ENCODE measurements at regions of chr17 and their contacts with region 1.

Region 1: DNA sequence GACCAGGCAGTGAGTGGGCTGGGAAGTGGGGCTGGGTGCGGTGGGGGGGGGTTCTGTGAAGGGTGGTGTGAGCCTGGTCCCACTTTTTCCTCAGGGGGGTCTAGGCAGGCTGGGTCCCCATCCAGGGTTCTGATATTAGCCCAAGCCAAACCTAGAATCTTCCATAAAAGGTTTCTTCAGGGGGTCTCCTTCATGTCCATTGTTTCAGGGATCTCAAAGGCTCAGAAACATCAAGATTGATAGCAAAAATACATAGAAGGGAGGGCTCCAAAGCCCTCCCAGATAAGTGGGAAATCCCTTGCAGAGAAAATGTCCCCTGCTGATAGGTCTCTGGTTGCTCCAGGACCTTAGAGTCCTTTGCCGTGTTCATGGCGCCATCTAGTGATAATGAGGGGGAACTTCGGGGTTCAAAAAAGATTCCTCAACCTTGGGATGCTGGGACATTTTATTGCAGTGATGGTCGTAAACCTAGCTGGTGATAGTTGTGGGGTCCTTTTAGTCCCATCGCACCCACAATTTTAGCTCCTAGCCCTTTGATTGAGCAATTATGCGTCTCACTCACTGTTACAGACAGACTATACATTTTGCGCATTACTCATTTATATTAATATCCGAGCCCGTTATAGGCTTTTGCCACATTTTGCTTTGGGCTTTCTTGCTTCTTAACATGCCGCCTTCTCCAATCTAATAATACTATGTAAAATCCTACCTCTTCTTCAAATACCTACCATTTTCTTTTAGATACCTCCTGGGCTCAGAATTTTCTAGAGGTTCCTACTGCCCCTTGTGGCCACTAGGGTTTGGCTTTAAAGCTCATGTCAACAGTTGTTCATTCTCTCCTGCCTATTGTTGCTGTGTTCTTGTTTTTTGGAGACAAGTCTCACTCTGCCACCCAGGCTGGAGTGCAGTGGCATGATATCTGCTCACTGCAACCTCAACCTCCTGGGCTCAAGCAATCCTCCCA is 35.1 kb downstream of the IGF2BP1 start:
- DNase-seq: peak; percentile 56
- ATAC-seq: no peak

Region 2: DNA sequence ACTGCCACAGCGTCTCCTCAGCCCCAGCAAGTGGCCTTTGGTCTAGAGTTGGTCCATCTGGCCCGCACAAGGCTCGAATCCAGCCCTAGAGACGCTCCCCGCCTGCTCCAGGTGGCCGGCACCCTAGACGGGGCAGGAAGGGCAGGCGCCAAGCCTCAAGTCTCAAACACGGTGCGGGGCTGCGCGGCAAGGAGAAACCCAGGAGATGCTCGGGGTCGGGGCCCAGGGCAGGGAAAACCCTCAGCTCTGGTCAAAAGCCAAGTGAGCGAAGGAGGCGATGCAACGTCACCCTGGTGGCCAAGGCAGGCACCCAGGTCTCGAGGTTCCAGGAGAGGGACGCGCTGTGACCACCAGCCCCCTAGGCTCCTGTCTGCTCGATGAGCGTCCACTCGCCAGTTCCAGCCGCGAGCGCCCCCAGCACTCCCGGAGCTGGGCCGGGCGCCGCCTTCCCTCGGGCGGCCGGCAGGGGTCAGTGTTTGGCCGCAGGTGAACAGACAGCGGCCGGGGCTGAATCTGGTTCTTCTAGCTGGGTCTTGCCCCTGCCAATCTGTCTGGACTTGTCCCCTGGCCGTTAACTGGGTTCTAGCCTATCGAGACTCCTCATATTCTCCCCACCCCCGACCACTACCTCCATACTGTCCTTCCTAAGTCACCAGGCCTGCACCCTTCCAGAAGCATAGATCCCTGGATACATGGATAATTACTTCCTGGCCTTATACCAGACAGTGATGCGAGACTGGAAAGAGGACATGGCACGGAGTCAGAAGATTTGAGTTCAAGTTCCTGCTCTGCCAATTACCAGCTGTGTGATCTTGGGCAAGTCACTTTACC is 353.9 kb before region 1 on chr17:
- intact Hi-C with region 1: loop called (anchors 5 kb)
- DNase-seq: peak; percentile 77
- ATAC-seq: peak; percentile 84

Region 3: DNA sequence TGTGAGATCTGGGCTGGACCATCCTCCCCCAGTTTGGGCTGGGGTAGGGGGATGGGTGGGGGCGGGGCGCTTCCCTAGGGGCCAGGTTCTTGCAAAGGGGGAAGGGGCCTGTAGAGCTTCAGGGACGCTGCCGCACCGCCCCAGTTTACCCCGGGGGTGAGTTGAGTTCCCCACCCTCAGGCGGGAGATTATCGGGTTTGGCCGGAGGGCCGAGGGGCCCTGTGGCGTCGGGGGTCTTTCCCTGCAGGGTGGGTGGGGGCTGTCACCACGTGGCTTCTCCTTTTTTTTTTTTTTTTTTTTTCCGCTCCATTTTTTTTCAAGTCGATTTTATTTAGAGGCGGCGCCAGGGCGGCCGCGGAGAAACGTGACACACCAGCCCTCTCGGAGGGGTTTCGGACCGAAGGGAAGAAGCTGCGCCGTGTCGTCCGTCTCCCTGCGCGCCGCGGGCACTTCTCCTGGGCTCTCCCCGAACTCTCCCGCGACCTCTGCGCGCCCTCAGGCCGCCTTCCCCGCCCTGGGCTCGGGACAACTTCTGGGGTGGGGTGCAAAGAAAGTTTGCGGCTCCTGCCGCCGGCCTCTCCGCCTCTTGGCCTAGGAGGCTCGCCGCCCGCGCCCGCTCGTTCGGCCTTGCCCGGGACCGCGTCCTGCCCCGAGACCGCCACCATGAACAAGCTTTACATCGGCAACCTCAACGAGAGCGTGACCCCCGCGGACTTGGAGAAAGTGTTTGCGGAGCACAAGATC is 35.0 kb before region 1 on chr17 and contains the start of gene IGF2BP1:
- intact Hi-C with region 1: no loop called
- DNase-seq: no peak
- ATAC-seq: peak; percentile 39
- total RNA-seq, gene IGF2BP1: not detected

Measured in Right ventricle myocardium inferior (tissue), 1 donor.